ENCODE measurements at regions of chr15 and their contacts with region 1.

Region 1: GRCh38 chr15:76368122-76368589 is 31.6 kb downstream of the ISL2 start:
- ATAC-seq: peak in 4 of 8 experiments; percentile 46 to 95 (median 82)
- H3K4me3 ChIP-seq: no peak overlapping the region
- H3K27ac ChIP-seq: no peak overlapping the region
- H3K4me1 ChIP-seq: peaks cover 2 to 5% of the 10 kb centered on the region in 2 donors

Region 2: DNA sequence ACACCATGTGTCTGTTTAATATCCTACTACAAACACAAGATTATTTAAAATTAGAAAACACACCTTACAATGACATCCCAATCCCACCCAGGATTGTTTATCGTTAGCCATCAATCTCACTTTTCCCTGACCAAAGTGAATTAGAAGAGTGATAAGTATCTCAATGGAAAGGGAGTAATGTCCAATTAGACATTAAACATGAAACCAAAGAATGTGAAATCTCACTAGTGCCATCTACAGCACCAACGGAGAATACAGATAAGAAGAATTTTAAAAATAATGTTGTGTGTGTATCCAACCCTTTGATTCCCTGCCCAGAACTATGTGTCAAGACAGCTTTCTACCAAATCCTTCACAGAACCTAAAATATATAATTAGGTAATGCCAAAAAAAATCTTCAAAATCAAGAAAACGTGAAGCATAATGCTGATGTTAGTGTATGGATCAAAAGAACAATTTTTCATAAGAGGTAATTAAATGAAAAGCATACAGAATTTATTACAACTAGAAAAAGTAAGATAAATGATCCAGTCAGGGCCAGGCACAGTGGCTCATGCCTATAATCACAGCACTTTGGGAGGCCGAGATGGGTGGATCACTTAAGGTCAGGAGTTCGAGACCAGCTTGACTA is 472.8 kb after region 1 on chr15:
- in situ Hi-C with region 1: loop called in 1 of 9 experiments (anchors 25 kb)
- ATAC-seq: peak in 3 of 8 experiments; percentile 35 to 60 (median 55)
- H3K4me3 ChIP-seq: no peak overlapping the region
- H3K27ac ChIP-seq: no peak overlapping the region
- H3K4me1 ChIP-seq: no peaks in the 10 kb centered on the region

Measured in motor neuron (in vitro differentiated cells).